Activated CD4-positive, alpha-beta T cell treated with anti-CD3 and anti-CD28 coated beads, Interleukin-2, amount 10 ng/mL, durations not matched to agents 24 days and 14 days (primary cell): ENCODE measurements at regions of chr18 and their contacts with region 1.

Region 1: GRCh38 chr18:74081966-74082741 is 65.5 kb downstream of the FBXO15 start:
- DNase-seq: peak; percentile 91
- H3K4me3 Mint-ChIP-seq: peak overlapping the region; percentile 80
- H3K27ac Mint-ChIP-seq: peak overlapping the region; percentile 96
- H3K4me1 Mint-ChIP-seq: peaks cover 18% of the 10 kb centered on the region
- H3K27me3 Mint-ChIP-seq: no peaks in the 10 kb centered on the region

Region 2: DNA sequence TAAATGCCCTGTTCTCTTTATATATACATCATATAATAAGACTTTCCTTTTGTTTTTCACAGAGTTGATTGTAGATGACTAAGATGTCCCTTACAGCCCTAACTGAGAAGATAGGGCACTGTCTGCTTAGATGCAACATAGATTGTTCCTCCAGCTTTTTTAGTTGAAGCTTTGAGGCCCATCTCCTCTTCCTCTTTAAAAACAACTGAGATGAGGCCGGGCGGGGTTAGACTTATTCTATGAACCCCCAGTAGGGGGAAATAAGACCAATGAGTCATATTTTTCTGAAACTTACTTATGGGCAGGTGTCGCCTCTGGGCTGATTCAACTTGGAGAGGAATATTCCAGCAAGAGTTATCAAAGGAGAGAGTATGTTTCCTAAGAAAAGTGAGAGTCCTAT is 19.1 kb before region 1 on chr18:
- intact Hi-C with region 1: loop called (anchors 1 kb)
- DNase-seq: peak; percentile 83
- H3K4me3 Mint-ChIP-seq: peak overlapping the region; percentile 82
- H3K27ac Mint-ChIP-seq: peak overlapping the region; percentile 84
- H3K4me1 Mint-ChIP-seq: peaks cover 48% of the 10 kb centered on the region
- H3K27me3 Mint-ChIP-seq: no peaks in the 10 kb centered on the region

Region 3: GRCh38 chr18:74097598-74098202 is 15.5 kb after region 1 on chr18:
- intact Hi-C with region 1: no loop called
- DNase-seq: no peak
- H3K4me3 Mint-ChIP-seq: no peak overlapping the region
- H3K27ac Mint-ChIP-seq: no peak overlapping the region
- H3K4me1 Mint-ChIP-seq: peaks cover 7% of the 10 kb centered on the region
- H3K27me3 Mint-ChIP-seq: peaks cover 2% of the 10 kb centered on the region

Region 4: DNA sequence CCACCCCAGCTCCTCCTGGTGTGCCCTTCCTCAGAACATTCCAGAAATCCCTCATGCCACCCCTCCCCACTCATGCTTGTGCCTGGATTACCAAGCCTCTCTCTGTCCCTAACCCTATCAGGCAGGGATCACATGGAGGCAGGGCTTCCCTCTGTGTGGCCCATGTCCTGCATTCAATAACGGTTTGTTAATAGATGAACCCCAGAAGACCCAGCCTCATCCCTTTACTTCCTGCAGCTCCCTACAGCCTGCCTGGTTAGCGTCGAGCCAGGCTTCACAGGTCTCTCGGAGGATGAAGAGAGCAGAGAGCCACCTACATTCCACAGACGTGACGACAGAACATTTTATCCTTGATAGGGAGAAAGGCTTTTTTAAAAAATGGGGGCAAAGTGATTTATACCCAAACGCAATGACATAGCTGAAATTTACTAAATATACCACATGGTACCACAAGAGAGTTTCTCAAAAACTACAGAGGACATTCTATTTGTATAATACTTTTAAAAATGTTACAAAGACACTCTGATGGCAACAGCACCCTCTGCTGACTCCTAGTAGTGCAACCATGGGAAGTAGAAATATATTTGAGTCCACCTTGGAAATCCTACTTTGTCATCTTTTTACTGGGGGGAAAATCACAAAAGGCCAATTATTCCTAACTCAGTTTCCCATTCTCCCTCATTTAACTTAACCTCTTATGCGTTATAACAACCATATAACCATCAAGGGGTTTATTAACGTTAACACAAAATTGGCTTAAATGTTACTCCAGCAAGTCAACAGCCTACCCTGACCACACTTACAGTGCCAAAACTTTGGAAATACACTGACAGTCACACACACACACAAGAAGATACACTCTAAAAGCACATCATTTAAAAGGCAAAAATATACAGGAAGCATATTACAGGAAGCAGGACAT is 34.7 kb after region 1 on chr18:
- intact Hi-C with region 1: loop called (anchors 1 kb)
- DNase-seq: peak; percentile 79
- H3K4me3 Mint-ChIP-seq: no peak overlapping the region
- H3K27ac Mint-ChIP-seq: no peak overlapping the region
- H3K4me1 Mint-ChIP-seq: peaks cover 12% of the 10 kb centered on the region
- H3K27me3 Mint-ChIP-seq: peaks cover 1% of the 10 kb centered on the region

Region 5: GRCh38 chr18:74139888-74140287 is 57.7 kb after region 1 on chr18:
- intact Hi-C with region 1: loop called (anchors 2 kb)
- DNase-seq: no peak
- H3K4me3 Mint-ChIP-seq: peak overlapping the region; percentile 79
- H3K27ac Mint-ChIP-seq: peak overlapping the region; percentile 91
- H3K4me1 Mint-ChIP-seq: peaks cover 37% of the 10 kb centered on the region
- H3K27me3 Mint-ChIP-seq: peaks cover 3% of the 10 kb centered on the region

Region 6: DNA sequence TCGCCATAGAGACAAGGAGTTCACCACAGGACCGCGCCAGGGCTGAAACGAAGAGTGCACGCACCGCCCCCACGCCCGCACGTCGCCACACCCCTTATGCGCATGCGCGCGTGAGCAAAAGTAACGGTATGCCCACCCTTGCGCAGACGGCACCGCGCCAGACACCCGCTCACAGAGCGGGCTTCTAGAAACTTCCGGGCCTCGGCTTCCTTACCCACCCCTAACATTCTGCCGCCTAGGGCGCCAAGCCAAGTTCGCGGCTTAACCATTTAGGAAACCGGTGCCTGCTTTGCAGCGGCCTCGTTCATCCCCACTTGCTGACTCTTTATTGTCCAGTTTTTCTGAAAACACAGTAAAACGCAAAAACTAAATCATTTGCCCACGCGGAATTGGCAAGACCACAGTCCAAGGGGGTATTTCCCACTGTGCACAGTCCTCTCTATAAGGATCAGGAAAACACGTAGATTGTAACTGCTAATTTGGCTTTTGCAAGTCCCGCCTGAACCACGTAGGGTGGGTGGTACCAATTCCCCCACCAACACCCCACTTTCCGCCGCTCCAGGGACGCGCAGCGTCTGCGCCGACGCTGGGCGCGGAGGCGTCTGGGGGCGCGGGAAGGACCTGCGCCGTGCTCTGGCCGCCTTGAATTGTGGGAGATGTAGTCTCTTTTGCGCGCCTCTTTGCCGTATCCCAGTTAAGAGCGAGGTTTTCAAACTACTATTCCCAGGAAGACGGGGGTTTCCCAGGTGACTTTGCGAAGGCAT is 65.8 kb after region 1 on chr18 and contains the starts of genes FBXO15 and TIMM21:
- intact Hi-C with region 1: loop called (anchors 2 kb)
- DNase-seq: peak; percentile 99
- H3K4me3 Mint-ChIP-seq: peak within 1 kb of the TSS; percentile 98
- H3K27ac Mint-ChIP-seq: peak within 1 kb of the TSS; percentile 97
- H3K4me1 Mint-ChIP-seq: peaks cover 50% of the 10 kb centered on the region
- H3K27me3 Mint-ChIP-seq: peaks cover 5% of the 10 kb centered on the region
- total RNA-seq, gene FBXO15: 1.2 and 1.3 TPM in 2 replicates
- total RNA-seq, gene TIMM21: 61.8 and 71.8 TPM in 2 replicates